Ascending aorta (tissue), 2 donors: ENCODE measurements at regions of chr10 and their contacts with region 1.

Region 1: DNA sequence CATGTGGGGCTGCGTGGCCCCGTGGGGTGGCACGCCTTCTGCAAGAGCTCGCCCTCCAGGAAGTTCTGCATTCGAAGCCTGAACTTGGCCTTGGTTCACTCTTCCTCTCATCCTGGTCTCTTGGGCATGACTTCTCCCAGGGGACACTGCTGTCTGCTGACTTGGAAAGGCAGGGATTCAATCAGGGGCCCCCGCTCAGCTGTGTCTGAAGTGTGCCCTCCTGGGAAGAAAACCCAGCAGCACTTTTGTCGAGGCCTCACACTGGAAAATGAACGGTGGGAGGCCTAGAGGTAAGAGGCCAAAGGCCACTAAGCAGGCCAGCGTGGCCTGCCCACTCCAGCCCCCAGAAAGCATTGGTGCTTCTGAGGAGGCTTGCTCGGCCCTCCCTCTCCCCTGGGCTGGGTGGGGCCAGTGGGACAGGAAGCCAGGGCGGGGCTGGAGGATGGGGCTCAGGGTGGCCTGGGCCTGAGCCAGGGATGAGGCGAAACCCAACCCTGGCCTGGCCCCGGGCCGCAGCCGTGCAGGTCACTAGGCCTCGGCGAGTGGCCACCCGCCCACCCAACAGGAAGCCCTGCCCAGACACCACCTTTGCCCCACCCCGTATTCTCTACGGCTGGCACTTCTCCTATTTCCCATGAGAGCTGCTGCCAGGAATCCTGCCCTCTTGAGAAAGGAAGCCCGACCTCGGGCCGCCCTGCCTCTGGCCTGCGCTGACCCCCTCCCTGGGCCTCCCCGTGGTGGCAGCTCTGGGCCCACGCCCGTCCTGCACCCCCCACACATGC is 81.1 kb downstream of the ZMIZ1 start:
- DNase-seq: peak; percentile 60 to 81
- H3K4me3 ChIP-seq: no peak overlapping the region
- H3K27ac ChIP-seq: peak overlapping the region; percentile 87 to 88
- H3K4me1 ChIP-seq: peaks cover 48 to 89% of the 10 kb centered on the region in 2 donors
- H3K27me3 ChIP-seq: no peaks in the 10 kb centered on the region
- CTCF ChIP-seq: no peak

Region 2: DNA sequence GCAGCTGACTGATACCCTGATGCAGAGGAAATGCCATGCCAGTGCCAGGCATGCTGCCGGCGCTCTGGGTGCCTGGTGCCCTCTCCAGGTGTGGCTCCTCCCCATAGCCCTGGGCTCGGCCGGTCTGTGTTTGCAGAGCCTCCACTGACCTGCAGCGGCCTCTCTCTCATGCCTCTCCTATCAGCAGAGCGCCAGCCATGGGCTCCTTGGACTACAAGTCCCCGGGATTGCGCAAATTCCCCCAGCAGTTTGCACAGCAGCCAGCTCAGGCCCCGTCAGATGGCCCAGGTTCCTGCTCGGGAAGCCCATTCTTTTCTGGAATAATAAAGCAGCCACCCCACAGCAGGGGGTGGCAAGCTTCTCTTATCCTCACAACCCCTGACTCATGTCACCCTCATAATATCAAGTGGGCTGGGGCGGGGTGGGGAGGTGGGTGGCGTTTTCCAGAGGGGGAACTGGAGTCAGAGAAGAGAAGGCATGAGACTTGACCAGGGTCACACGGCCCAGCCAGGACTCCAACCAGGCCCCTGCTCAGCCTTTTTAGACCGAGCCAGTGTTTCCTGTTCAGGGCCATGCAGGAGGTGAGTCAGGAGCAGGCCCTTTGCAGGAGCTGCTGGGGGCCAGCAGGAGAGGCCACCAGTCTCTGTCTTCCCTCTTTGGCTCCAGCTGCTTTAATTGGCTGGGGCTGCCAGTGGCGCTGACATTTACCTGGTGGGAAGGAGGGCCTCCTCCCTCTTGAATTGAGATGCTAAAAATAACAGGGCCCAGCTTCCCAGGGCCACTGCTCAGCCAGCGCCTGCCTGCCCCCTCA is 22.5 kb before region 1 on chr10:
- intact Hi-C with region 1: no loop called
- DNase-seq: peak in 1 of 2 donors; percentile 78
- H3K4me3 ChIP-seq: no peak overlapping the region
- H3K27ac ChIP-seq: no peak overlapping the region
- H3K4me1 ChIP-seq: peaks cover 4 to 22% of the 10 kb centered on the region in 2 donors
- H3K27me3 ChIP-seq: no peaks in the 10 kb centered on the region
- CTCF ChIP-seq: no peak

Region 3: DNA sequence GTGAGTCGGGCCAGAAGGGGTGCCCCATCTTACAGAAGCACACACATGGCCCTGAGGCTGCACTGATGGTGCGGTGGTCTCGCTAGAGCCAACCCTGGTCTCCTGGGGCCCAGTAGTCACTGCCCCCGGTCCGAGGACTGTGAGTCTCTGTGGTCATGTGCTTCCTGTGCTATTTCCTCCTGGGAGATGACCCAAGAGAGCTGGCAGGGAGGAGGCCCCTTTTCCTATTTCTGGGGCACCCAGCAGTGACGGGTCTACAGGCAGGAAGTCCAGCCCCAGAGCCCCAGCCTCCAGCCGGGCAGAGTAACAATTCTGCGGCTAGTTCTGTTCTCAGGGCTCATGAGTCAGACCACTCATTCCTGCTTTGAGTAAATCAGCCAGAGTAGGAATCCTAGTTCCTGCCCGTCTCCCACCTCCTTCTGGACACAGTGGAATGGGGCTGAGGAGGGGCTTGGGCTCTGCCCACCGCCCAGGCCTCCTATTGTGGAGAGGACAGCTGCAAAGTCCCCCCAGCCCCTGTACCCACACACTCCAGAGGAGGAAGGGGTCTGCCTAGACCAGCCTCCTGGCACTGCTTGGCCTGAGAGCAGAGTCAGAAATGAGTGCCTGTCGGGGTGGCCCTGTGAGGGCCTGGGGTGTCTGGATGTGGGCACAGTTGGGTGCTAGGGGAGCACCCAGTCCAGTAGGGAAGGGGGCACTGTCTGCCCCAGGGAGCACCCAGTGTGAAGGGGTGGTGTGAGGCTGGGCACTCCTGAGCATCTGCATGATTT is 116.9 kb after region 1 on chr10:
- intact Hi-C with region 1: loop called (anchors 5 kb)
- DNase-seq: peak; percentile 86 to 96
- H3K4me3 ChIP-seq: peak overlapping the region in 1 of 2 donors; percentile 7
- H3K27ac ChIP-seq: peak overlapping the region; percentile 92 to 95
- H3K4me1 ChIP-seq: peaks cover 28 to 40% of the 10 kb centered on the region in 2 donors
- H3K27me3 ChIP-seq: no peaks in the 10 kb centered on the region
- CTCF ChIP-seq: no peak

Region 4: GRCh38 chr10:80205478-80206276 is 1055.8 kb after region 1 on chr10 and contains the start of gene ANXA11:
- intact Hi-C with region 1: loop called (anchors 10 kb)
- DNase-seq: peak; percentile 58 to 92
- H3K4me3 ChIP-seq: peak within 1 kb of the TSS; percentile 73 to 88
- H3K27ac ChIP-seq: peak within 1 kb of the TSS; percentile 96 to 97
- H3K4me1 ChIP-seq: peaks cover 18 to 48% of the 10 kb centered on the region in 2 donors
- H3K27me3 ChIP-seq: no peaks in the 10 kb centered on the region
- CTCF ChIP-seq: no peak
- total RNA-seq, gene ANXA11: 237 TPM